GM12878 (cell line): ENCODE measurements at regions of chr11 and their contacts with region 1.

Region 1: GRCh38 chr11:13238879-13239514 is 38.6 kb upstream of the BMAL1 start:
- DNase-seq: no peak
- ATAC-seq: peak; percentile 93
- H3K4me3 ChIP-seq: no peak overlapping the region
- H3K27ac ChIP-seq: no peak overlapping the region
- H3K4me1 ChIP-seq: no peaks in the 10 kb centered on the region
- H3K27me3 ChIP-seq: peaks cover 0 to 3% of the 10 kb centered on the region in 2 experiments; a peak in 2 of 4 replicates
- CTCF ChIP-seq: peak; percentile 71 to 91 (median 86)
- EP300 ChIP-seq: no peak
- POLR2A ChIP-seq: no peak
- RAD21 ChIP-seq: peak; percentile 63

Region 2: DNA sequence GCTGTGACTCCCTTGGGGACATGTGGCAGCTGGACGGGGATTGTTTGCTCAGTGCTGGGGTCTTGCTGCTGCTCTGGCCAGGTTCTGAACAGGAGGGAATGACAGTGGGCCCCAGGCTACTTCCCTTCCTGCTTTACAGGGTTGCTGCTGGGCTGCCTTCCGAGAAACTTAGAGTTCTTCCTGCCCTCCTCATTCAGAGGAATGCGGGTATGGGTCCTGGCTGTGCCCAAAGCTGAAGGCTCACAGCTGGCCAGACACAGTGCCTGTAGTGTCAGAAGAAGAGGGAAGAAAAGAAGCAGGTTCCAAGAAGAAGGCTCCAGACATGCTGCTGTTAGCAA is 969.9 kb before region 1 on chr11:
- CTCF ChIA-PET with region 1: no interaction called
- POLR2A ChIA-PET with region 1: no interaction called
- RAD21 ChIA-PET with region 1: no interaction called
- SMC1A ChIA-PET with region 1: no interaction called
- in situ Hi-C with region 1: no loop called
- intact Hi-C with region 1: no loop called
- DNase-seq: no peak
- ATAC-seq: no peak
- H3K4me3 ChIP-seq: no peak overlapping the region
- H3K27ac ChIP-seq: no peak overlapping the region
- H3K4me1 ChIP-seq: no peaks in the 10 kb centered on the region
- H3K27me3 ChIP-seq: peaks cover 0 to 1% of the 10 kb centered on the region in 2 experiments; a peak in 3 of 4 replicates
- CTCF ChIP-seq: no peak
- EP300 ChIP-seq: no peak
- POLR2A ChIP-seq: no peak
- RAD21 ChIP-seq: no peak

Region 3: GRCh38 chr11:13210424-13210823 is 28.6 kb before region 1 on chr11:
- CTCF ChIA-PET with region 1: interaction called, 18 read pairs
- POLR2A ChIA-PET with region 1: no interaction called
- RAD21 ChIA-PET with region 1: interaction called, 4 read pairs
- SMC1A ChIA-PET with region 1: interaction called, 7 read pairs
- in situ Hi-C with region 1: no loop called
- intact Hi-C with region 1: no loop called
- DNase-seq: no peak
- ATAC-seq: peak; percentile 66
- H3K4me3 ChIP-seq: no peak overlapping the region
- H3K27ac ChIP-seq: no peak overlapping the region
- H3K4me1 ChIP-seq: peaks cover 12% of the 10 kb centered on the region
- H3K27me3 ChIP-seq: no peaks in the 10 kb centered on the region; a peak in 1 of 4 replicates
- CTCF ChIP-seq: peak; percentile 32 to 49 (median 47); a peak in 5 of 6 replicates
- EP300 ChIP-seq: no peak
- POLR2A ChIP-seq: no peak
- RAD21 ChIP-seq: peak; percentile 74

Region 4: GRCh38 chr11:13415203-13415602 is 176.2 kb after region 1 on chr11:
- CTCF ChIA-PET with region 1: no interaction called
- POLR2A ChIA-PET with region 1: no interaction called
- RAD21 ChIA-PET with region 1: no interaction called
- SMC1A ChIA-PET with region 1: no interaction called
- in situ Hi-C with region 1: no loop called
- intact Hi-C with region 1: no loop called
- DNase-seq: no peak
- ATAC-seq: no peak
- H3K4me3 ChIP-seq: no peak overlapping the region
- H3K27ac ChIP-seq: no peak overlapping the region
- H3K4me1 ChIP-seq: no peaks in the 10 kb centered on the region
- H3K27me3 ChIP-seq: no peaks in the 10 kb centered on the region
- CTCF ChIP-seq: no peak
- EP300 ChIP-seq: no peak
- POLR2A ChIP-seq: no peak
- RAD21 ChIP-seq: no peak